Dorsolateral prefrontal cortex (tissue), 120 donors: ENCODE measurements at regions of chr12 and their contacts with region 1.

Region 1: DNA sequence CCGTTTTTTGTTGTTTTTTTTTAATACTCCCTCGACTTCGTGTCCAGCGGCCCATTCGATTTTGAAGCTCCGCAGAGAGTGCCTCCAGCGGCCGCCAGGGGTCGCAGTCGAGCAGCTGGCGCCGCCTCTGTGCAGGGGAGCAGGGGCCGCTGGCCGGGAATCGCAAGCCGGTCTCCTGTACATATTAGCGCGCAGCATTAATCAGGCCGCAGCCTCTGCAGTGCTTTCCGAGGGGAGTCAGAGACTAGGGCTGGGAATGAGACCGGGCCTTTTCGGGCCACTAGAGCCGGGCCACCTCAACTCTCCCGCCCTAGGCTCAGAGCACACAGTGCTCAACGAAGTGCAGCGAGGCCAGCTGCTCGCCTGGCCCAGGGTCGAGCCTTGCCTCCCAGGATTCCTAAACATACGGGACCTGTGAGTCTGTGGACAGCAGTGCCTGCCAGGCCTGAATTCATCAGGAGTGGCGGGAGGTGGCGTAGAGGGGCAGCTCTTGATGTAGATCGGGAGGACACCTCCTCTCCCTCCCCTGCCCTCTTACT is 81.8 kb downstream of the EMP1 start:
- DNase-seq: peak in 9 of 10 donors; percentile 63 to 87 (median 72)
- H3K4me3 ChIP-seq: peak overlapping the region in 38 of 59 donors; percentile 0 to 52 (median 25)
- H3K27ac ChIP-seq: peak overlapping the region in 27 of 59 donors; percentile 1 to 75 (median 44)
- H3K27me3 ChIP-seq: peaks cover 0 to 10% (median 0%) of the 10 kb centered on the region in 45 donors
- CTCF ChIP-seq: peak; percentile 90 to 99 (median 95)

Region 2: GRCh38 chr12:13661005-13661887 is 382.9 kb after region 1 on chr12:
- intact Hi-C with region 1: loop called (anchors 2 to 10 kb)
- DNase-seq: peak; percentile 23 to 74 (median 56)
- H3K4me3 ChIP-seq: peak overlapping the region in 4 of 59 donors; percentile 10 to 37 (median 16)
- H3K27ac ChIP-seq: no peak overlapping the region
- H3K27me3 ChIP-seq: peaks cover 0 to 5% (median 0%) of the 10 kb centered on the region in 45 donors
- CTCF ChIP-seq: peak; percentile 66 to 93 (median 83)

Region 3: GRCh38 chr12:13973996-13974395 is 695.7 kb after region 1 on chr12:
- intact Hi-C with region 1: loop called in 1 of 2 experiments (anchors 10 kb)
- DNase-seq: no peak
- H3K4me3 ChIP-seq: peak overlapping the region in 39 of 59 donors; percentile 1 to 75 (median 64)
- H3K27ac ChIP-seq: peak overlapping the region in 5 of 59 donors; percentile 0 to 39 (median 13)
- H3K27me3 ChIP-seq: peaks cover 0 to 7% (median 0%) of the 10 kb centered on the region in 45 donors
- CTCF ChIP-seq: no peak